Activated naive CD8-positive, alpha-beta T cell treated with anti-CD3 and anti-CD28 coated beads, Interleukin-2, amount 10 ng/mL, durations not matched to agents 7 days and 5 days (primary cell): ENCODE measurements at regions of chr4 and their contacts with region 1.

Region 1: GRCh38 chr4:48779998-48780742 is at the start of gene FRYL:
- DNase-seq: peak; percentile 91
- ATAC-seq: peak; percentile 96
- H3K4me3 Mint-ChIP-seq: peak within 1 kb of the TSS; percentile 98
- H3K27ac Mint-ChIP-seq: peak within 1 kb of the TSS; percentile 89
- H3K4me1 Mint-ChIP-seq: peaks cover 30% of the 10 kb centered on the region
- H3K27me3 Mint-ChIP-seq: no peaks in the 10 kb centered on the region
- total RNA-seq, gene FRYL: 95.9 to 114 TPM

Region 2: DNA sequence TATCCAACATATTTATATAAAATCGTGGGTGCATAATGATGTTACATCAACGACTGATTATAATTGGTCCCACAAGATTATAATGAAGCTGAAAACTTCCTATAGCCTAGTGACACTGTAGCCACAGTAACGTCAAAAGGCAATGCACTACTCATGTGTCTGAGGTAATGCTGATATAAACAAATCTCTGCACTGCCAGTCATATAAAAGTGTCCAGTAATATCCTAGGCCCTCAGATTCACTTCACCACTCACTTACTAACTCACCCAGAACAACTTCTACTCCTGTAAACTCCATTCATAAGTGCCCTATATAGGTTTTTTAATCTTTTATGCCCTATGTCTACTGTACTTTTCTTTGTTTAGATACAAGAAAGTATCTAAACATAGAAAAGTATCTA is 18.9 kb before region 1 on chr4:
- POLR2A ChIA-PET with region 1: no interaction called
- DNase-seq: no peak
- ATAC-seq: no peak
- H3K4me3 Mint-ChIP-seq: no peak overlapping the region
- H3K27ac Mint-ChIP-seq: no peak overlapping the region
- H3K4me1 Mint-ChIP-seq: peaks cover 16% of the 10 kb centered on the region
- H3K27me3 Mint-ChIP-seq: no peaks in the 10 kb centered on the region

Region 3: DNA sequence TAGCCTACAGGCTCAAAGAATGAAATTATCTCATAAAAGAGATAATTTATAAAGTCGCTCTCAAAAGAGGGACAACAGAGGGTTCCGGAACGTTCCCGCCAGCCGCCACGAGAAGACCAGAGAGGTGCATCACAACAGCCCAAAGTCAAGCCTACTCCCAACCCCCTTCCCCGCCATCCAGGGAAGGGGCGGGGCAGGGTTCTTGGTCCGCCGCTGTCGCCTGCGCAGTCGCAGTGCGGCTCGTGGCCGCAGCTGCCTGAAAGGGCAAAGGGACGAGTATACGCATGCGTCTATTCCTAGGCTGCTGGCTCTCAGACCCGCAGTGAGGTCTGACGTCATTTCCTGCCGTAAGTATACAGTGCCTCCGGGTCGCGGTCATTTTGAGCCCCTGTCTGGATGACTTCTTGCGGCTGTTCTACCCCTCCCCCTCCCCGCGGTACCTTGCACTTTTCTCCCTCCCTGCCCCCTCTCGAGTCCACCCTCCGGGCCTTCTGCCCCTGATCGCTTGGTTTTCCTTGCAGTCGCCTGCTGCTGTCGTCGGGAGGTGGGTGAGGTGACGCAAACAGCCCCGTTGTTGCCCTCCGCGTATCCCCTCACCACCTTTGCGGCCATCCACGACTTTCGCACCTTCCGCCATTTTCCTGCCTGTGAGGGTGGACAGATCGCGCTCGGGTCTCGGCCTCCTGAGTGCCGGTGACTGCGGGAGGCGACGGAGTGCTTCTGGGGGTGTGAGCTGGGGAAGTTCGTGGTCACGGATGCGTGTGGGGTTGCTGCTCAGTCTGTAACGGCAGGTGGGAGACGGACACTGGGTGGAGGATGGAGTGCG is 50.7 kb after region 1 on chr4 and contains the start of gene OCIAD1:
- POLR2A ChIA-PET with region 1: interaction called, 25 read pairs
- DNase-seq: peak; percentile 91
- ATAC-seq: peak; percentile 99
- H3K4me3 Mint-ChIP-seq: peak within 1 kb of the TSS; percentile 100
- H3K27ac Mint-ChIP-seq: peak within 1 kb of the TSS; percentile 100
- H3K4me1 Mint-ChIP-seq: peaks cover 11% of the 10 kb centered on the region
- H3K27me3 Mint-ChIP-seq: no peaks in the 10 kb centered on the region
- total RNA-seq, gene OCIAD1: 104 to 107 TPM

Region 4: DNA sequence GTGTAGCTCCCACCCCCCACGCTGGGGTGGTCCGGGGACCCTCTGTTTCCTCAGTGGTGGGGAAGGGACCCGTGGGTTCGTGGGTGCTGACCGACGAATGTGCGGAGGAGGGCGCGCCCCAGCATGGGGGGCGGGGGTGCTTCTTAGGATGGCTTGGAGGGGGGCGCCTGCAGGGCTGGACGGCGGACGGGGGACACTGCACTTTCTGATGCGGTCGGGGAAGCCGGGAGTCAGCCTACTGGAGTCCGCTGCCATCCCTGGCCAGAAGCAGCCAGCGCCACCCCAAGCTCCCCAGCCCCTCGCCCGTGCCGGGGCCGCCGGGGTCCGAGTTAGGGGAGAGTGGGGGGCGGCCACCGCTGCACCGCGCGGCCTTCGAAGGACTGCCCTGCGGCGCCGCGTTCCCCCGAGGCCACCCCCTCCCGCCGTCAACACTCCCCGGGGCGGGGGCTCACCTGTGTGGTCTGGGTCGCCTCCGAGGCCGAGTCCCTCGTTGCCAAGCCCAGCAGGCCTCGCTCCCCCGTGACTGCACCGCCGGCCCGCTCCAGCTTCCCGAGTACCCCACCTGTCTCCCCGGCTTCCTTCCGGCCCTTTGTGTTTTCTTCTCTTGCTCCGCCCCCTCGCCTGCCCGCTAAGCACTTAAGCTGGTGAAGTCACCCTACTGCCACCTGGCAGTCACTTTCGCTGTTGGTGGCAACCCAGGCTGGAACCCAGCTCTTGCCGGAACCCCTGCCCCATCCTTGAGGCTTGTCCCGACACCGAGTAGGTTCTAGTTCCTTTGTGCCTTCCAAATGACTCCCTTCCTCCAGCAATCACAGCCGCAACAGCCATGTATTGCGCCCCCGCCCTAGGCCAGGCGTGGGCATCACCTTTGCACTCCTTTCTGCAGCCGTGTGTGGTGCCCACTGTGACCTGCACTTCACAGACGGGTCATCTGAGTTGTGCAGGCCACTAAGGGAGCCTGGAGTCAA is 126.3 kb after region 1 on chr4 and contains the start of gene OCIAD2:
- POLR2A ChIA-PET with region 1: interaction called, 18 read pairs
- DNase-seq: peak; percentile 75
- ATAC-seq: peak; percentile 95
- H3K4me3 Mint-ChIP-seq: peak within 1 kb of the TSS; percentile 93
- H3K27ac Mint-ChIP-seq: peak within 1 kb of the TSS; percentile 97
- H3K4me1 Mint-ChIP-seq: peaks cover 29% of the 10 kb centered on the region
- H3K27me3 Mint-ChIP-seq: no peaks in the 10 kb centered on the region
- total RNA-seq, gene OCIAD2: 85.1 to 85.7 TPM